ENCODE measurements at regions of chr18 and their contacts with region 1.

Region 1: DNA sequence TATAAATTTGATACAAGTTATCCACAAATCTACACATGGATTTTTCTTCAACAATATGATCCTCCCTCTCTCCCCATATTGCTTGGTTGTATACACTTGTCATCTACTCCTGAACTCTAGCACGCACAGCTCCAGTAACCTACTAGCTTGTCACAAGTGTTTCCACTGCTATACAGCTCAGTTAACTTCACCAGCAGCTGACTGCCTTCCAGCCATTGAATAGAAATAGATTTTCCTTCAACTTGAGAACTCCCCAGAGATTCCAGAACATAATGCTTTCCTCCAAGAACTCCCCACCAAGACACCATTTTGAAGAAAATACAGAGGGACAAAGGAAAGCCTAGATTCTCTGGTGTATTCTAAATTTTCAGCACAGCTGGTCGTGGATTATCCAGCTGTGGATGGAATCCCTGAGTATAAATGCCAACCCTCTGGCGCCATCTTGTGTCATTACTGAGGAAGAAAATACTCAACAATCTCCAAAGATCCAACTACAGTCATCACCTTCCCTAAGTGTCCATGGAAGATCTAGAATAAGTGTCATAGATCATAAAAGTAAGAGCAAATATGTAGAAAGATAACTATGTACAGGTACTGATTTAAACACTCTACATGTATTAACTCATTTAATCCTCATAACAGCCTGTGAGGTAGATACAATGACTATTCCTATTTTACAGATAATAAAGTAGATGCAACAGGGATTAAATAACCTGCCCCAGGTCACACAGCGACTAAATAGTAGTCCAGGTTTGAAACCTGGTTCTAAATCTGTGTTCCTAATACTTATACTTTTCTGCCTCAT is 156.7 kb downstream of the ARHGAP28 start:
- DNase-seq: peak; percentile 57 to 80 (median 66)
- ATAC-seq: peak; percentile 90
- H3K4me3 ChIP-seq: no peak overlapping the region
- H3K27ac ChIP-seq: no peak overlapping the region
- H3K4me1 ChIP-seq: peaks cover 0 to 4% of the 10 kb centered on the region in 2 experiments; a peak in 1 of 5 replicates
- H3K27me3 ChIP-seq: no peaks in the 10 kb centered on the region
- CTCF ChIP-seq: peak; percentile 70 to 89 (median 80)
- EP300 ChIP-seq: no peak
- POLR2A ChIP-seq: no peak
- RAD21 ChIP-seq: peak; percentile 94 to 95

Region 2: DNA sequence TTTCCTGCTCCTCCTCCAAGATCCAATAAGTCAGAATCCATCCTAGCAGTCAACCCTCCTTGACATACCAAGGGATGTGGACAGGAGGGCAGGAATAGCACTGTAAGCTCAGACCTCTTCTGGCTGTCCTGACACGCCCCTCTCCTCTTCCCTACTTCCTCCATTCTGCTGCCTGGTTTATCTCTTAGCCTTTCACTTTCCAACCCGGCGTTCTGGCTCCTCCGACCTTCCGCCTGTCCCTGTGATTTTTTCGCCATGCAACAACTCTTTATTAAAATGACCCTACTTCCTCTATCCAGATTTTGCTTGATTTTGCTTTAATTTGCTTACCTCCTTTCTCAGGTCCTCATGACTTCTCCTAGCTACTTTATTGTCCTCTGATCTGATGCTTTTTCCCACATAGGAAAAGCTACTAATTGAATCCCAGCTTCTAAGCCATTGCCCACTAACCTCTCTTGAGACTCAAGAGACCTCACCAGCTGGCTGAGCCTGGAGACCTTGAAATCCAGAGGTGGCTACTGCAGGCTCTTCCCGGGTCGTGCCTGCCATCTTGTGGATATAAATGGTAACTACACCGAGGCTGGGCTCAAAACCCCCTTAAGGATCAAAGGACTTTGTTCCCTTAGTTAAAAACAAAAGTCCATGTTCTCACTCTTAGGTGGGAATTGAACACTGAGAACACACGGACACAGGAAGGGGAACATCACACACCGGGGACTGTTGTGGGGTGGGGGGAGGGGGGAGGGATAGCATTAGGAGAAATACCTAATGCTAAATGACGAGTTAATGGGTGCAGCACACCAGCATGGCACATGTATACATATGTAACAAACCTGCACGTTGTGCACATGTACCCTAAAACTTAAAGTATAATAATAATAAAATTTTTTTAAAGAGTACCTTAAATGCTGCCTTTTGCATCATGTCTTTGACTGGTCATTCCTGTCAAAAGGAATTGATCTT is 1828.5 kb before region 1 on chr18:
- CTCF ChIA-PET with region 1: no interaction called
- POLR2A ChIA-PET with region 1: no interaction called
- in situ Hi-C with region 1: loop called (anchors 25 kb)
- intact Hi-C with region 1: no loop called
- DNase-seq: peak; percentile 68 to 77 (median 72)
- ATAC-seq: peak; percentile 87
- H3K4me3 ChIP-seq: no peak overlapping the region
- H3K27ac ChIP-seq: no peak overlapping the region
- H3K4me1 ChIP-seq: no peaks in the 10 kb centered on the region
- H3K27me3 ChIP-seq: no peaks in the 10 kb centered on the region
- CTCF ChIP-seq: peak; percentile 74 to 79 (median 74)
- EP300 ChIP-seq: no peak
- POLR2A ChIP-seq: no peak
- RAD21 ChIP-seq: peak; percentile 73 to 85

Region 3: GRCh38 chr18:5556310-5556974 is 1329.8 kb before region 1 on chr18:
- CTCF ChIA-PET with region 1: no interaction called
- POLR2A ChIA-PET with region 1: no interaction called
- in situ Hi-C with region 1: no loop called
- intact Hi-C with region 1: no loop called
- DNase-seq: no peak
- ATAC-seq: no peak
- H3K4me3 ChIP-seq: no peak overlapping the region
- H3K27ac ChIP-seq: no peak overlapping the region
- H3K4me1 ChIP-seq: no peaks in the 10 kb centered on the region
- H3K27me3 ChIP-seq: no peaks in the 10 kb centered on the region
- CTCF ChIP-seq: no peak
- EP300 ChIP-seq: no peak
- POLR2A ChIP-seq: no peak
- RAD21 ChIP-seq: no peak

Region 4: GRCh38 chr18:5879479-5879882 is 1006.7 kb before region 1 on chr18:
- CTCF ChIA-PET with region 1: no interaction called
- POLR2A ChIA-PET with region 1: no interaction called
- in situ Hi-C with region 1: loop called (anchors 10 kb)
- intact Hi-C with region 1: loop called (anchors 1 kb)
- DNase-seq: peak in 3 of 4 experiments; percentile 26 to 39 (median 27)
- ATAC-seq: peak; percentile 44; the same call in 1 of the 3 replicates
- H3K4me3 ChIP-seq: no peak overlapping the region
- H3K27ac ChIP-seq: no peak overlapping the region
- H3K4me1 ChIP-seq: no peaks in the 10 kb centered on the region
- H3K27me3 ChIP-seq: no peaks in the 10 kb centered on the region
- CTCF ChIP-seq: peak; percentile 36 to 65 (median 62); a peak in 5 of 6 replicates
- EP300 ChIP-seq: no peak
- POLR2A ChIP-seq: no peak
- RAD21 ChIP-seq: peak; percentile 49 to 65

Region 5: DNA sequence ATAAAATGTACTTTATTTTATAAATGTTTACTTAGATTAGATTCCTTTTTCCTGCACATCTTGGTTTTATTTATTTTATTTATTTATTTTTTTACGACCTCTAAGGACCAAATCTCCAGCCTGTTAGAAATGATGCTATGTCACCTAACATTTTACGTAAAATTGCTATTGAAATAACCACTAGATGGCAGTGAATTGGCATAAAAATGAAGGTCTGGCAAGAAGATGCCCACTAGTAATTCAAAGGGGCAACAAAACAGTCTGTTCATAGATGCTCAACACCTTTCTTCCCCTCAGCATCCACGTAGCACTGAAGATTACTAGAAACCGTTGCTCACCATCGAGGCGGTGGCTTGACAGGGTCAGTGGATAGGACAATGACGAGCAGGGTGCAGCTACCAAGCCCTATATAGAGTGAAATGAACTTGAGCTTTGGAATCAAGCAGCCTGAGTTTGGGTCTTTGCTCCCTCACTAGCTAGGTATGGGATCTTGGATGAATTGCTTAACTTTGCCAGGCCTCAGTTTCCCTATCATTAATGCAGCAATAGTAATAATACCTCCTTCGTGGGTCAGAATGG is 342.8 kb before region 1 on chr18:
- CTCF ChIA-PET with region 1: interaction called, 41 read pairs
- POLR2A ChIA-PET with region 1: no interaction called
- in situ Hi-C with region 1: loop called (anchors 10 kb)
- intact Hi-C with region 1: loop called (anchors 1 kb)
- DNase-seq: peak in 3 of 4 experiments; percentile 18 to 25 (median 19)
- ATAC-seq: peak; percentile 55
- H3K4me3 ChIP-seq: no peak overlapping the region
- H3K27ac ChIP-seq: no peak overlapping the region
- H3K4me1 ChIP-seq: no peaks in the 10 kb centered on the region
- H3K27me3 ChIP-seq: no peaks in the 10 kb centered on the region
- CTCF ChIP-seq: peak; percentile 46 to 66 (median 53); a peak in 5 of 6 replicates
- EP300 ChIP-seq: no peak
- POLR2A ChIP-seq: no peak
- RAD21 ChIP-seq: peak; percentile 79 to 82

Region 6: DNA sequence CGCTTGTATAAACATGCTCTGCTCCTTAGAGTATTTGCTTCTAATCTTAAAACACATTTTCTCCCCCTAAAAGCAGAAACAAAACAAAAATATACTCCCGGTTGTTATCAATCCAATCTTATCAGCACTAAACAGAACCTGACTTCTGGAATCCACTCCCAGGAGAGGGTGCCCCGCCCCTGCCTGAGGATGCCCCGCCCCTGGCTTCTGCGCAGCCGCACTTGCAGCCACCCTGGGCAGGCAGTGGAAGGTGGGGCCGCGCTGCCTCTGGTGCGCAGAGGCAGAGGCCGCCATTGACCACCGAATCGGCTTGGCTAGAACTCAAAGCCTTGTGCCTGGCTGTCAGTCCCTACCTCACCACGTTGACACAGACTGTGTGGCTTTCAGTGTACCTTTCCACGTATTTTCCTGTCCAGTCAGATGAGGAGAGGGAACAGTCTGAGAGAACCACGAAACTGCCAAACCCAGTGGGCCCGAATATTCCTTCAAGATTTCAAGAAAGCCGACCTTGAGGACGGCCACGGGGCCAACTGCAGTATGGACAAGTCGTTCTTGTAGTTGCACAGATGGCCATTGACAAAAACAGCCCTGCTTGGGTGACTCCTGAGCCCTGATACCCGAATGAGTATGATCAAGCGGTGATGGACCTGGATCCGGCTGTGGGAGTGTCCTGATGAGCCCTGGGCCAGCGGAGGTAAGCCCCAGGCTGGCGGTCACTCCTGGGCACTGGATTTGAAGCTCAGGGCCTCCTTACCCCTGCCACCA is 202.9 kb before region 1 on chr18:
- CTCF ChIA-PET with region 1: interaction called, 4 read pairs
- POLR2A ChIA-PET with region 1: interaction called, 4 read pairs
- in situ Hi-C with region 1: no loop called
- intact Hi-C with region 1: loop called (anchors 2 kb)
- DNase-seq: peak; percentile 96 to 100 (median 98)
- ATAC-seq: peak; percentile 93
- H3K4me3 ChIP-seq: peak overlapping the region; percentile 52
- H3K27ac ChIP-seq: peak overlapping the region; percentile 87
- H3K4me1 ChIP-seq: peaks cover 9 to 31% of the 10 kb centered on the region in 2 experiments; a peak in 3 of 5 replicates
- H3K27me3 ChIP-seq: no peaks in the 10 kb centered on the region
- CTCF ChIP-seq: peak in 2 of 3 experiments; percentile 38 to 51; a peak in 4 of 6 replicates
- EP300 ChIP-seq: peak; percentile 84
- POLR2A ChIP-seq: peak; percentile 93
- RAD21 ChIP-seq: peak; percentile 58 to 61

Region 7: GRCh38 chr18:6994771-6995435 is 108.7 kb after region 1 on chr18:
- CTCF ChIA-PET with region 1: no interaction called
- POLR2A ChIA-PET with region 1: no interaction called
- in situ Hi-C with region 1: no loop called
- intact Hi-C with region 1: no loop called
- DNase-seq: no peak
- ATAC-seq: no peak
- H3K4me3 ChIP-seq: no peak overlapping the region
- H3K27ac ChIP-seq: no peak overlapping the region
- H3K4me1 ChIP-seq: no peaks in the 10 kb centered on the region; a peak in 1 of 5 replicates
- H3K27me3 ChIP-seq: peaks cover 13 to 32% of the 10 kb centered on the region in 2 experiments; a peak in 3 of 5 replicates
- CTCF ChIP-seq: no peak
- EP300 ChIP-seq: no peak
- POLR2A ChIP-seq: no peak
- RAD21 ChIP-seq: no peak

Region 8: GRCh38 chr18:7349181-7349837 is 463.1 kb after region 1 on chr18:
- CTCF ChIA-PET with region 1: no interaction called
- POLR2A ChIA-PET with region 1: no interaction called
- in situ Hi-C with region 1: no loop called
- intact Hi-C with region 1: no loop called
- DNase-seq: no peak
- ATAC-seq: no peak
- H3K4me3 ChIP-seq: no peak overlapping the region
- H3K27ac ChIP-seq: no peak overlapping the region
- H3K4me1 ChIP-seq: no peaks in the 10 kb centered on the region
- H3K27me3 ChIP-seq: no peaks in the 10 kb centered on the region; a peak in 1 of 5 replicates
- CTCF ChIP-seq: peak in 1 of 3 experiments; percentile 15; a peak in 1 of 6 replicates
- EP300 ChIP-seq: no peak
- POLR2A ChIP-seq: no peak
- RAD21 ChIP-seq: no peak

Measured in K562 (cell line).